ENCODE measurements at regions of chr6 and their contacts with region 1.

Region 1: DNA sequence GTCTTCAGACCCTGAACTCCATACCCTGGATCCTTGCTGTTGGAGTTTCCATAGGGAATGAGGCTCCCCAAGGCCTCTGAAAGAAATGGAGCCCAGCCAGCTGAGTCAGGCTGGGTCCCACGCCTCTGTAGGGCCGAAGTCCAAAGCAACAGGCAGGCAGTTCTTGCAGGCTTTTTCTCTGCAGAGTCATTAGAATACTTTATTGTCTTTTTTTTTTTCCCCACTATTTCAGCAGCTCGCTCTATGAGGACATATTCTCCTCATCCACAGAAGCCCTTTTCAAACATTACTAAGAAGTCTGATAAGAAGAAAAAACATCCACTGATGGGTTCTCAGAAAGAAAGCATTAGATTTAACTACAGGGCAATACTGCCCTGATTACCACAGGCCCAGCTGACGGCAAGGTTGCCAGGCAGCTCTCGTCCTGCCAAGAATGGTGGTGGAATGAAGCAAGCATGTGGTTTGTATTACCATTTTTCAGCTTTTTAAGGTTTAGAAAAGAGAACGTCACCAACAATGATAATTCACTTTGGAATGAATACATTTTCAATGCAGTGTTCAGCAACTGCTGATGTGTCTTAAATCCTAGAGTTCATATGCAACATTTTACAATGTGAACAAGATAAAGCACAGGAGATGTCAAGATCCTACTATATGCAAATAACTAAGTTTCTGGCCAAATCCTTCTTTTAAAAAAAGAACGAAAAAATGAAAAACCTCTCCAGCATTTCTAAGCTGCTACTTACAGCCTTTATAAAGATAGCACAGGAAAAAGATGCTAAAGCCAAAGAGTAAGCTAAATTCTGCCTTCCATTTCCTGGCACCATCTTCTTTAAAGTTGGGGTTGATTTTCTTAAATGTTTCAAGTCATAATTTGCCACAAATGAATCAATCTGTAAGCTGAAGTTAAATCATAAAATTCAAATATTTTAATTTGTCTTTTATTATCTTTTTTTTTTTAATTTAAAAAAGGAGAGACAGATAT is 223.6 kb upstream of the CITED2 start:
- DNase-seq: peak; percentile 98
- ATAC-seq: peak; percentile 91
- H3K4me3 ChIP-seq: no peak overlapping the region
- H3K27ac ChIP-seq: peak overlapping the region; percentile 95
- H3K4me1 ChIP-seq: peaks cover 10% of the 10 kb centered on the region
- H3K27me3 ChIP-seq: no peaks in the 10 kb centered on the region
- CTCF ChIP-seq: no peak
- POLR2A ChIP-seq: no peak; the same call in 1 of the 2 replicates
- RAD21 ChIP-seq: peak; percentile 16; the same call in 1 of the 2 replicates

Region 2: DNA sequence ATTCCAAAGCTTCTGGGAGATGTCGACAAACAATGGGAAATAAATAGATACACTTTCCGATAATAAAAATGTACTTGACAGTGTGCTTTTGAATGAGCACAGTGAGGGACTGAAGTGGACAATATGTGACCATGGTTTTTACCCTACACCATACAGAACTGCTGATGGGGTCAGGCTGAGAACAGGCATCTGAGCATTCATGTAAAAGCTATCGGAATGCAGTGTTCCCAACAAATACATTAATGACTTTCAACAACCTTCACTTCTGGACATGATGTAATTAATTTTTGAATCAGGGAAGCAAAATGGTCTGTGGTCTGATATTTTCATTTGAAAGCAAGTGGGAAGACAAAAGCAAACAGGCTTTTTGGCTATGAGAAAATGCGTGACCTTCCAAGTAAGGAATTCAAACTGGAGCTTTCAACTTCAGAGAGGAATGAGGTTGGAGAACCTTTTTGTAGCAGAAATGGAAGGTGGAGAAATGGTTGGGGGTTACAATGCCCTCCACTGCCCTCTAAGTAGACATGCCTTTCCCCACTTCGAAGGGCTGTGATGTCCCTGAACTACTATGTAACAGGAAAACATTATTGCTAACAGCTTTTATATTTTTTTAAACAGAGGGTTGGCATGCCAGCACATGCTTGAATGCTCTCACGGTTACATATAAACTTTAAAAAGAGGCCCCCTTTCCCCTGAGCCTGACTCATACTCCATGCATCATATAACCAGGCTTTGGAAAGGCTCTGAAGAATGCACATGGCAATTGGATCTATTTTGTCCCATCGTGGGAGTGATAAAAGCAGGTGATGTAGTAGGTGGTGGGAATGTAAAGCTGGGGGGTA is 20.1 kb before region 1 on chr6:
- CTCF ChIA-PET with region 1: no interaction called
- POLR2A ChIA-PET with region 1: no interaction called
- dilution Hi-C with region 1: no loop called
- in situ Hi-C with region 1: no loop called
- intact Hi-C with region 1: loop called (anchors 1 kb)
- DNase-seq: peak; percentile 94
- ATAC-seq: peak; percentile 94
- H3K4me3 ChIP-seq: no peak overlapping the region
- H3K27ac ChIP-seq: peak overlapping the region; percentile 98
- H3K4me1 ChIP-seq: peaks cover 15% of the 10 kb centered on the region
- H3K27me3 ChIP-seq: no peaks in the 10 kb centered on the region
- CTCF ChIP-seq: no peak
- POLR2A ChIP-seq: no peak
- RAD21 ChIP-seq: peak; percentile 25

Region 3: GRCh38 chr6:139764498-139764986 is 166.5 kb after region 1 on chr6:
- CTCF ChIA-PET with region 1: no interaction called
- POLR2A ChIA-PET with region 1: no interaction called
- dilution Hi-C with region 1: no loop called
- in situ Hi-C with region 1: no loop called
- intact Hi-C with region 1: loop called (anchors 5 kb)
- DNase-seq: peak; percentile 99
- ATAC-seq: peak; percentile 94
- H3K4me3 ChIP-seq: no peak overlapping the region
- H3K27ac ChIP-seq: peak overlapping the region; percentile 29; the same call in 1 of the 2 replicates
- H3K4me1 ChIP-seq: peaks cover 13% of the 10 kb centered on the region
- H3K27me3 ChIP-seq: no peaks in the 10 kb centered on the region
- CTCF ChIP-seq: no peak
- POLR2A ChIP-seq: no peak
- RAD21 ChIP-seq: peak; percentile 17; the same call in 1 of the 2 replicates

Region 4: DNA sequence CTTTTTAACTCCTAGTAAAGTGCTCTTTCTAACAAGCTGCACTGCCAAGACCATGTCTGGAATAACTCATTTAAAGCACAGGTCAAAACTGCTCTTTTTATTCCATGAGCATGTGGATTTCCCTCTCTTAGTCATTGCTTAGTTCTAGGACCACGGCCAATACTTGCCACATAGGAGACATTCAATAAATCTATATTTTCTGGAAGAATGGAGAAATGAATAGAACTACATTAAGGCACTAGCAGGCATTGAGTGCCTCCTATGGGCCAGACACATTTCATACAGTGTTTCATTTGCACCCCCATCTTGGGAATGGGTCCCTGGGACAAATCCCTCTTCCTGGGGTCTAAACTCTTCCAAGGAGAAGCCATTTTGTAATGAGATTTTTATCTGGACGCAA is 329.2 kb after region 1 on chr6:
- CTCF ChIA-PET with region 1: no interaction called
- POLR2A ChIA-PET with region 1: no interaction called
- dilution Hi-C with region 1: no loop called
- in situ Hi-C with region 1: no loop called
- intact Hi-C with region 1: loop called (anchors 5 kb)
- DNase-seq: peak; percentile 93
- ATAC-seq: peak; percentile 48
- H3K4me3 ChIP-seq: no peak overlapping the region
- H3K27ac ChIP-seq: no peak overlapping the region
- H3K4me1 ChIP-seq: peaks cover 7% of the 10 kb centered on the region
- H3K27me3 ChIP-seq: no peaks in the 10 kb centered on the region
- CTCF ChIP-seq: peak; percentile 60
- POLR2A ChIP-seq: no peak
- RAD21 ChIP-seq: peak; percentile 68

Region 5: GRCh38 chr6:140052756-140053729 is 455.0 kb after region 1 on chr6:
- CTCF ChIA-PET with region 1: no interaction called
- POLR2A ChIA-PET with region 1: no interaction called
- dilution Hi-C with region 1: no loop called
- in situ Hi-C with region 1: loop called (anchors 10 kb)
- intact Hi-C with region 1: no loop called
- DNase-seq: peak; percentile 59
- ATAC-seq: no peak; the same call in 1 of the 2 replicates
- H3K4me3 ChIP-seq: no peak overlapping the region
- H3K27ac ChIP-seq: peak overlapping the region; percentile 18
- H3K4me1 ChIP-seq: peaks cover 12% of the 10 kb centered on the region
- H3K27me3 ChIP-seq: no peaks in the 10 kb centered on the region
- CTCF ChIP-seq: peak; percentile 44
- POLR2A ChIP-seq: no peak
- RAD21 ChIP-seq: peak; percentile 52

Measured in IMR-90 (cell line).